H1 (cell line): ENCODE measurements at regions of chr17 and their contacts with region 1.

Region 1: GRCh38 chr17:39687811-39688518 is at the start of gene PGAP3:
- DNase-seq: peak; percentile 85 to 91
- H3K4me3 ChIP-seq: peak within 1 kb of the TSS; percentile 75 to 84 (median 80)
- H3K27ac ChIP-seq: peak within 1 kb of the TSS; percentile 97
- H3K4me1 ChIP-seq: peaks cover 0 to 13% (median 3%) of the 10 kb centered on the region in 4 experiments
- H3K27me3 ChIP-seq: no peaks in the 10 kb centered on the region
- CTCF ChIP-seq: no peak
- EP300 ChIP-seq: no peak
- POLR2A ChIP-seq: peak; percentile 77 to 91
- RAD21 ChIP-seq: no peak; a peak in 1 of 4 replicates
- total RNA-seq, gene PGAP3: 18.5 and 21.0 TPM in 2 replicates

Region 2: GRCh38 chr17:39568702-39569101 is 119.3 kb before region 1 on chr17:
- CTCF ChIA-PET with region 1: no interaction called
- POLR2A ChIA-PET with region 1: no interaction called
- DNase-seq: no peak
- H3K4me3 ChIP-seq: no peak overlapping the region
- H3K27ac ChIP-seq: no peak overlapping the region
- H3K4me1 ChIP-seq: peaks cover 0 to 4% (median 2%) of the 10 kb centered on the region in 4 experiments; a peak in 4 of 7 replicates
- H3K27me3 ChIP-seq: peaks cover 0 to 2% (median 0%) of the 10 kb centered on the region in 4 experiments; a peak in 2 of 7 replicates
- CTCF ChIP-seq: no peak
- EP300 ChIP-seq: no peak
- POLR2A ChIP-seq: no peak
- RAD21 ChIP-seq: no peak

Region 3: DNA sequence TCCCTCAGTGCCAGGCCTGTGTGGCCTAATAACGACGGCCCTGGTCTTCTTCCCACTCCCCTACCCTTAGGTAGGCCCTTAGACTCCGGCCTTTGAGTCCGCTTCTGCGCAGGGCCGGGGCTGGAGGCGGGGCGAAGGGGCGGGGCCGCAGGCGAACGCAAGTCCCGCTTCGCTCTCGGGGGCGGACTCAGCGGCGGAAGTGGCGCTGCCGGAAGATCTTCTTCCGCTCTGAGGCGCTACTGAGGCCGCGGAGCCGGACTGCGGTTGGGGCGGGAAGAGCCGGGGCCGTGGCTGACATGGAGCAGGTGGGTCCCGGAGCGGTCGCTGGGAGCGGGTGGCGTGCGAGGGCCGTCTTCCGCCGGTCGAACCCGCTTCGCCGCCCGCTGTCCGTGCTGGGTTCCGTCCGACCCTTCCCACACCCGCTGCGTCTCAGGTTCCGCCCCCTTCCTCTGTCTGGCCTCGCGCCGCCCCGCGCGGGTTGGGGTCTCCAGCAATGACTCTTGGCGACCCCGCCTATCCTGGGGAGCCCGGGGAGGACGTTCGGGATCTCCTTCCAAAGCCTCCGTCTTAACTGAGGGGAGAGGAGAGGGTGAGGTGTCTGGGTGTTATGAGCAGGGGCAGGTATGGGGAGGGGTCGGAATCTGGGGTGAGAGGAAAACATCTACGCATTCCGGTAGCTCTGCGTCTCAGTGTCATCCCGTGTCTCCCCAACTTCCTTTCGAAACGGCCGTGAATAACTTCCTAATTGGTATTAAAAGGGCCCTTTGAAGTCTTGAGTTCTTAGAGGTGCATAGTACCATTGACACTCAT is 50.8 kb before region 1 on chr17 and contains the start of gene STARD3:
- CTCF ChIA-PET with region 1: interaction called, 1,885 read pairs
- POLR2A ChIA-PET with region 1: interaction called, 5 read pairs
- DNase-seq: peak in 1 of 2 experiments; percentile 92
- H3K4me3 ChIP-seq: peak within 1 kb of the TSS; percentile 79 to 91 (median 85)
- H3K27ac ChIP-seq: peak within 1 kb of the TSS; percentile 64; the same call in 1 of the 2 replicates
- H3K4me1 ChIP-seq: peaks cover 13 to 40% (median 26%) of the 10 kb centered on the region in 4 experiments
- H3K27me3 ChIP-seq: 0 out of 7 replicates have a peak, but pooled peaks cover 0 to 3% (median 0%) of the 10 kb centered on the region in 4 experiments
- CTCF ChIP-seq: peak in 2 of 3 experiments; percentile 18 to 32; a peak in 3 of 4 replicates
- EP300 ChIP-seq: 0 out of 3 replicates have a peak, but pooled peaks of 1 of the 2 experiments have one; percentile 22
- POLR2A ChIP-seq: peak in 1 of 2 experiments; percentile 61; a peak in 2 of 3 replicates
- RAD21 ChIP-seq: 0 out of 4 replicates have a peak, but pooled peaks of 1 of the 2 experiments have one; percentile 6
- total RNA-seq, gene STARD3: 47.6 and 56.7 TPM in 2 replicates

Region 4: GRCh38 chr17:39738931-39739884 is 51.2 kb after region 1 on chr17:
- CTCF ChIA-PET with region 1: interaction called, 3 read pairs
- POLR2A ChIA-PET with region 1: interaction called, 16 read pairs
- DNase-seq: peak in 1 of 2 experiments; percentile 88
- H3K4me3 ChIP-seq: peak overlapping the region; percentile 54 to 86 (median 82)
- H3K27ac ChIP-seq: peak overlapping the region; percentile 89
- H3K4me1 ChIP-seq: peaks cover 5 to 31% (median 23%) of the 10 kb centered on the region in 4 experiments
- H3K27me3 ChIP-seq: no peaks in the 10 kb centered on the region
- CTCF ChIP-seq: no peak
- EP300 ChIP-seq: no peak
- POLR2A ChIP-seq: peak; percentile 29 to 34; a peak in 2 of 3 replicates
- RAD21 ChIP-seq: no peak